ENCODE measurements at regions of chr14 and their contacts with region 1.

Region 1: GRCh38 chr14:97410667-97411620 is 613.8 kb downstream of the VRK1 start:
- DNase-seq: peak in 1 of 9 donors; percentile 9
- ATAC-seq: no peak
- H3K4me3 ChIP-seq: no peak overlapping the region
- H3K4me3 Mint-ChIP-seq: no peak overlapping the region
- H3K27ac ChIP-seq: no peak overlapping the region
- H3K27ac Mint-ChIP-seq: no peak overlapping the region
- H3K4me1 ChIP-seq: peaks cover 15 to 34% of the 10 kb centered on the region in 2 donors
- H3K4me1 Mint-ChIP-seq: peaks cover 0 to 30% (median 21%) of the 10 kb centered on the region in 7 donors
- H3K27me3 ChIP-seq: peaks cover 0 to 6% of the 10 kb centered on the region in 2 donors
- H3K27me3 Mint-ChIP-seq: peaks cover 0 to 11% (median 1%) of the 10 kb centered on the region in 5 donors

Region 2: DNA sequence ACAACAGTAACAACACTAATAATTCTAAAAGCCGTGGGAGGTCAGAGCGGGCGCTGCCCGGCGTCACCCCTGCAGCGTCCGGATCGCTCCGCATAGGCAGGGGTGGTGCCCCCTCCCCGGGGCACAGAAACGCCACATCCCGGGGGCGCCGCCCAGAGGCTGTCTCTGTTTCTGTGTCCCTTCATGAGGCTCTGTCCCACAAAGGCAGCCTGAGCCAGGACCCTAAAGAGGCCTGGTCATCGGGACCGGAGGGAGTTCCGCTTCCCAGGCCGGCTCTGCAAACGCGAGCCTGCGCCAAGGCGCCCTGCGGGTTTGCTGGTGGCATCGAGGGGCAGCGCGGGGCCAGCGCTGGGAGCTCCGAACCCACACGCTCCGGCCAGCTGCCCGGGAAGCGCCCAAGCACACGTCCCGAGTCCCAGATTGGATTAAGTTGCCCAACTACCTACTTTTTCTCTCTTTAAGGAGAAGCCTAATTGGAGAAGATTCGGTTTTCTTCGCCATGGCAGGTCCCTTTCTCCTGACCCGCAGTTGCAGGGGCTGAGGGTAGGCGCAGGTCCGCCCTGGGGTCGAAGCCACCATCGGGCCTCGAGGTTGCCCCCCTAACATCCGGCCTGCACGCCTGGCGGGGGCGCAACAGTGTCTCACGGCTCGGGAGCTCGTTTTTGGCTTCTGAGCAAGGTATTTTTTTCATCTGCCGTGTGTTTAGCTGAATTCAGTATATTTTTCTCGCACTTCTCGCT is 192.1 kb before region 1 on chr14:
- CTCF ChIA-PET with region 1: no interaction called
- POLR2A ChIA-PET with region 1: no interaction called
- intact Hi-C with region 1: loop called in 1 of 2 experiments (anchors 5 kb)
- DNase-seq: peak in 8 of 9 donors; percentile 13 to 41 (median 30)
- ATAC-seq: peak; percentile 41
- H3K4me3 ChIP-seq: peak overlapping the region; percentile 76
- H3K4me3 Mint-ChIP-seq: peak overlapping the region; percentile 81 to 93 (median 88)
- H3K27ac ChIP-seq: no peak overlapping the region
- H3K27ac Mint-ChIP-seq: peak overlapping the region in 5 of 9 donors; percentile 8 to 75 (median 43)
- H3K4me1 ChIP-seq: peaks cover 0 to 7% of the 10 kb centered on the region in 2 donors
- H3K4me1 Mint-ChIP-seq: peaks cover 8 to 39% (median 29%) of the 10 kb centered on the region in 7 donors
- H3K27me3 ChIP-seq: no peaks in the 10 kb centered on the region
- H3K27me3 Mint-ChIP-seq: peaks cover 3 to 63% (median 17%) of the 10 kb centered on the region in 5 donors

Region 3: GRCh38 chr14:97379091-97379531 is 31.8 kb before region 1 on chr14:
- CTCF ChIA-PET with region 1: no interaction called
- POLR2A ChIA-PET with region 1: no interaction called
- intact Hi-C with region 1: loop called in 1 of 2 experiments (anchors 5 kb)
- DNase-seq: peak in 4 of 9 donors; percentile 14 to 32 (median 24)
- ATAC-seq: peak; percentile 57
- H3K4me3 ChIP-seq: peak overlapping the region; percentile 15
- H3K4me3 Mint-ChIP-seq: peak overlapping the region; percentile 53 to 92 (median 82)
- H3K27ac ChIP-seq: peak overlapping the region; percentile 41
- H3K27ac Mint-ChIP-seq: peak overlapping the region; percentile 52 to 89 (median 80)
- H3K4me1 ChIP-seq: peaks cover 26 to 52% of the 10 kb centered on the region in 2 donors
- H3K4me1 Mint-ChIP-seq: peaks cover 30 to 71% (median 47%) of the 10 kb centered on the region in 7 donors
- H3K27me3 ChIP-seq: no peaks in the 10 kb centered on the region
- H3K27me3 Mint-ChIP-seq: peaks cover 0 to 6% (median 0%) of the 10 kb centered on the region in 5 donors

Region 4: DNA sequence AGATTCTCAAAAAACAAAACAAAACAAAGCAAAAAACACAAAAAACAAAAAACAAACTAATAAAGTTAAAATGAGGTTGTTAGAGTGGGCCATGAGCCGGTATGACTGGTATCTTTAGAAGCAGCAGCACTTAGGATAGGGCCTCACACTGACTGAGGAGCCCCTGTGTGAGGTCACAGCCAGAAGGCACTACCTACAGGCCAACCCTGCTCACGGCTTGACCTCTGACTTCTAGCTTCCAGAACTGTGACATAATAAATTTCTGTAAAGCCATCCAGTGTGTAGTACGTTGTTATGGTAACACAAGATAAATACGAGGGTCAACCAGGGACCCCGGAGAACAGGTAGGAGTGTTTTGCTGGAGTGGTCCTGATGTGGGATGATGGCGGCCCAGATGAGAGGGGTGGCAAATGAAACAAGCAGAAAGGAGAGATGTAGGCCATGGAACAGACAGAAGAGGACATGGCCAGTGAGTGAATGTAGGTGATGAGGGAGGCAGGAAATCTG is 15.9 kb after region 1 on chr14:
- CTCF ChIA-PET with region 1: no interaction called
- POLR2A ChIA-PET with region 1: no interaction called
- intact Hi-C with region 1: loop called in 1 of 2 experiments (anchors 2 kb)
- DNase-seq: no peak
- ATAC-seq: no peak
- H3K4me3 ChIP-seq: no peak overlapping the region
- H3K4me3 Mint-ChIP-seq: no peak overlapping the region
- H3K27ac ChIP-seq: no peak overlapping the region
- H3K27ac Mint-ChIP-seq: peak overlapping the region in 1 of 9 donors; percentile 41
- H3K4me1 ChIP-seq: no peaks in the 10 kb centered on the region
- H3K4me1 Mint-ChIP-seq: peaks cover 0 to 4% (median 0%) of the 10 kb centered on the region in 7 donors
- H3K27me3 ChIP-seq: no peaks in the 10 kb centered on the region
- H3K27me3 Mint-ChIP-seq: peaks cover 0 to 11% (median 0%) of the 10 kb centered on the region in 5 donors

Measured in naive thymus-derived CD4-positive, alpha-beta T cell (primary cell).